Activated B cell treated with CpG ODN at 0.5 μM for 24 hours (primary cell): ENCODE measurements at regions of chr1 and their contacts with region 1.

Region 1: DNA sequence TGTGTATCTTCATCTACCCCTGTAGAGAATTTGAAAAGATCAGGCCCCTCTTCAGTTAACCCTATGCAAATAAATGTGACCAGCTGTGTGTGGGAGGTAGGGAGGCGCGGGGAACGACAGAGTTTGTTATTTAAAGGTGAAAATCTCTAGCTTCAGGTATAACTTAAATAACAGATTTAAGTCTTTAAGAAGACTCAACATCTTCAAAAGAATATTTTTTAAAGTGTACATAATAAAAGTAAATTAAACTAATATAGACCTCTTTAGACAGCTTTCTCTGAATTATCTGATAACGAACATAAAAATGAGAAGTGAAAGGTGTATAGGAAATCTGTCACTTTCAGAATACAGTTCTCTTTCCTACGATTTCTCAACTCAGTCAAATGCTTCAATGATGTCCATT is 16.0 kb downstream of the ANGPTL3 start:
- DNase-seq: no peak
- ATAC-seq: peak; percentile 72
- H3K4me3 Mint-ChIP-seq: peak overlapping the region; percentile 74
- H3K27ac Mint-ChIP-seq: peak overlapping the region; percentile 12
- H3K4me1 Mint-ChIP-seq: peaks cover 20% of the 10 kb centered on the region
- H3K27me3 Mint-ChIP-seq: no peaks in the 10 kb centered on the region
- CTCF ChIP-seq: no peak

Region 2: GRCh38 chr1:62687903-62688686 is 74.8 kb after region 1 on chr1 and contains the start of gene DOCK7:
- CTCF ChIA-PET with region 1: no interaction called
- POLR2A ChIA-PET with region 1: no interaction called
- intact Hi-C with region 1: loop called (anchors 5 kb)
- DNase-seq: peak; percentile 55
- ATAC-seq: peak; percentile 72
- H3K4me3 Mint-ChIP-seq: peak within 1 kb of the TSS; percentile 89
- H3K27ac Mint-ChIP-seq: peak within 1 kb of the TSS; percentile 76
- H3K4me1 Mint-ChIP-seq: peaks cover 23% of the 10 kb centered on the region
- H3K27me3 Mint-ChIP-seq: no peaks in the 10 kb centered on the region
- CTCF ChIP-seq: no peak
- total RNA-seq, gene DOCK7: 13.4 and 18.0 TPM in 2 replicates

Region 3: GRCh38 chr1:62849032-62849431 is 235.7 kb after region 1 on chr1:
- CTCF ChIA-PET with region 1: no interaction called
- POLR2A ChIA-PET with region 1: no interaction called
- intact Hi-C with region 1: no loop called
- DNase-seq: no peak
- ATAC-seq: no peak
- H3K4me3 Mint-ChIP-seq: no peak overlapping the region
- H3K27ac Mint-ChIP-seq: no peak overlapping the region
- H3K4me1 Mint-ChIP-seq: no peaks in the 10 kb centered on the region
- H3K27me3 Mint-ChIP-seq: no peaks in the 10 kb centered on the region
- CTCF ChIP-seq: no peak

Region 4: DNA sequence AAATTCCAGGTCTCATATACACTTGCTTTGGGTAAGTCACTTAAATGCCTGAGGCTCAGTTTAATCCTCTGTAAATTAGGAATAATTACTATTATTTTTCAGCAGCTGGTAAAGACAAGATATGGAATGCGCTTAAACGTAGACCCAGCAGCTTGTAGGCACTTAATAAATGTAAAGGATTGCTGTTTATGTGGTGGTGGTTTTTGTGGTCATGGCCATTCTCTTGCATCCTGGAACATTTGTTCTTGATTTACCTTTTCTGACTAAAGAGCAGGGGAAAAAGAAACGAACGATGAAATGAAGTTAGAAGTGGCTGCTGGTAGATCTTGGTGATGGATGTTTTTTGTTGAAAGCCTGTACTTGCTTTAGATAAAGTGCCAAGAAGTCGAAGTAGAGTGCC is 514.0 kb after region 1 on chr1:
- CTCF ChIA-PET with region 1: no interaction called
- POLR2A ChIA-PET with region 1: no interaction called
- intact Hi-C with region 1: no loop called
- DNase-seq: no peak
- ATAC-seq: no peak
- H3K4me3 Mint-ChIP-seq: no peak overlapping the region
- H3K27ac Mint-ChIP-seq: no peak overlapping the region
- H3K4me1 Mint-ChIP-seq: no peaks in the 10 kb centered on the region
- H3K27me3 Mint-ChIP-seq: peaks cover 7% of the 10 kb centered on the region
- CTCF ChIP-seq: no peak